ENCODE measurements at regions of chr11 and their contacts with region 1.

Region 1: GRCh38 chr11:123478352-123478987 is 48.4 kb downstream of the GRAMD1B start:
- DNase-seq: peak; percentile 38
- H3K4me3 ChIP-seq: no peak overlapping the region
- H3K27ac ChIP-seq: no peak overlapping the region
- H3K4me1 ChIP-seq: no peaks in the 10 kb centered on the region
- H3K27me3 ChIP-seq: no peaks in the 10 kb centered on the region
- CTCF ChIP-seq: peak; percentile 64

Region 2: GRCh38 chr11:123301696-123302400 is 176.6 kb before region 1 on chr11:
- intact Hi-C with region 1: loop called (anchors 2 kb)
- DNase-seq: peak; percentile 46
- H3K4me3 ChIP-seq: peak overlapping the region; percentile 37
- H3K27ac ChIP-seq: no peak overlapping the region
- H3K4me1 ChIP-seq: no peaks in the 10 kb centered on the region
- H3K27me3 ChIP-seq: peaks cover 6% of the 10 kb centered on the region
- CTCF ChIP-seq: peak; percentile 90

Region 3: DNA sequence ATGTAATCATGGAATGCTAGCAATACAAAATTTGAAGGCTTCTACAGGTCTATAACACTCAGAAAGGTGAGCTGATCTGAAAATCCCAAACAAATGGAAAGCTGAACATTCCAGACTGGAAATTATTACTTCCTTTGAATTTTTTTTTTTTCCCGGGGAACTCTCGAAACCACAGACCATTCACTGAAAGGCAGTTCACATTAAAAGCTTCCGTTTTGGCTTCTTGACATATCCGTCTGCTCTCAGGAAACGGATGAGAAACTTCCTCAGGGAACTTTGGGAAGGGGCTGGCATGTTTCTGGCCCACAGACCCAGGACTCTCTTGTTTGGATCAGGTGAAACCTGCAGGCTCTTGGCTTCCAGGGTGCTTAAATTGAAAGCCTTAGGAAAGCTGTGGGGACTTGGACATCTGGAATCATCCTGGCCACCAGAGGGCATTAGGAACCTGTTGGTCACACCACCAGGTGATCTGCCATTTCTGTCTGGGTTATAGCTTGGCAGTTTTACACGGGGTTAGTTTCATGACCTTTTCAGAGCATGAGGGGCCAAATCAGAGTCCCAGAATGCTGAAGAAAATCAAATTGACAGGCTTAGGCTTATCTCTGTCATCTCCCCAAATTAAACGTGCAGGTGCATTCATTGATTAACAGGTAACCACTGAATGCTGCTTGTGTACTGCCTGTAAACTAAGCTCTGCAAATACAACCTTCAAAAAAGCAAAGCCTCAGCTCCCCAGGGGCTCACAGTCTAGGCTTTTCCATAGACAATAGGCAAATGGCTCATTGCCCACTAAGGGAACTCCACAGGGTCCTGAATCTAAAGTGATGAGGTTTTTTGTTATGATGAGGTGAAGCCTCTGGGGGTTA is 71.1 kb before region 1 on chr11:
- intact Hi-C with region 1: loop called (anchors 2 kb)
- DNase-seq: peak; percentile 81
- H3K4me3 ChIP-seq: no peak overlapping the region
- H3K27ac ChIP-seq: no peak overlapping the region
- H3K4me1 ChIP-seq: peaks cover 3% of the 10 kb centered on the region
- H3K27me3 ChIP-seq: no peaks in the 10 kb centered on the region
- CTCF ChIP-seq: peak; percentile 71

Region 4: DNA sequence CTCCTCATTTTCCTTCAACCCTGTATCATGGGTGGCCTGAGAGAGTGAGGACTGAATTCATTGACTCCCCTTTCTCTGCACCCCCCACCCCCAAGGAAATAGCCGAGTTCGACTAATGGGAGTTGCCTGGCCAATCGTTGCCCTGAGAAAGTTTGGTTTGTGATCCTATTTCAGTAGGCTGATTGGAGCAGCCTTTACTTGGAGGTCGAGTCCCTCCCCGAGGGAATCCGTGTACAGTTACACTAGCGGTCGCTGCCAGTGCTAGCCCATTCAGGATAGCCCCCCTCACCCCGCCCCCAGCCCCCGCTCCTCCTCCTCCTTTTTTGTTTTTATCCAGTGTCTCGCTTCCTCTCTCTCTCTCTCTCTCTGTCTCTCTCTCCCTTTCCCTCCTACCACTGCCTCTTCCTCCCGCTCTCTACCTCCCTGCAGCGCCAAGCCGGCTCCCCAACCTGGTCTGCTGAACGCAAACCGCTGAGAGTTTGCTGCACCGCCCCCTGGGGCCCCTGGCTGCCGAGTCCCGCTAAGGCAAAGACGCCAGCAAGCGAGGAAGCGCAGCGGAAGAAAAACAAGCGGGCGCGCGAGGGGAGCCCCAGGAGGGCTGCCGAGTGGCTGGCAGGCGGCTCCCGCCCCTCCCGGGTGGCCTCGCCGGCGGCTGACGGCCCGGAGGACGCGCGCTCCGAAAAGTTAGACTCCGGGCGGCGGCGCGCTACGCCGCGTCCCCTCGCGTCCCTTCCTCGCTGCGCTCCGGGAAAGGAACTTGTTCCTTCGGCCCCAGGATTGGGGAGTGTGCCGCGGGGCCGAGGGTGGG is 48.4 kb before region 1 on chr11 and contains the start of gene GRAMD1B:
- intact Hi-C with region 1: no loop called
- DNase-seq: peak; percentile 38
- H3K4me3 ChIP-seq: peak within 1 kb of the TSS; percentile 62
- H3K27ac ChIP-seq: peak within 1 kb of the TSS; percentile 53
- H3K4me1 ChIP-seq: no peaks in the 10 kb centered on the region
- H3K27me3 ChIP-seq: no peaks in the 10 kb centered on the region
- CTCF ChIP-seq: no peak
- total RNA-seq, gene GRAMD1B: 1.7 to 1.9 TPM

Measured in colonic mucosa (tissue), 4 donors.